Left ventricle myocardium superior (tissue), 1 donor: ENCODE measurements at regions of chr12 and their contacts with region 1.

Region 1: DNA sequence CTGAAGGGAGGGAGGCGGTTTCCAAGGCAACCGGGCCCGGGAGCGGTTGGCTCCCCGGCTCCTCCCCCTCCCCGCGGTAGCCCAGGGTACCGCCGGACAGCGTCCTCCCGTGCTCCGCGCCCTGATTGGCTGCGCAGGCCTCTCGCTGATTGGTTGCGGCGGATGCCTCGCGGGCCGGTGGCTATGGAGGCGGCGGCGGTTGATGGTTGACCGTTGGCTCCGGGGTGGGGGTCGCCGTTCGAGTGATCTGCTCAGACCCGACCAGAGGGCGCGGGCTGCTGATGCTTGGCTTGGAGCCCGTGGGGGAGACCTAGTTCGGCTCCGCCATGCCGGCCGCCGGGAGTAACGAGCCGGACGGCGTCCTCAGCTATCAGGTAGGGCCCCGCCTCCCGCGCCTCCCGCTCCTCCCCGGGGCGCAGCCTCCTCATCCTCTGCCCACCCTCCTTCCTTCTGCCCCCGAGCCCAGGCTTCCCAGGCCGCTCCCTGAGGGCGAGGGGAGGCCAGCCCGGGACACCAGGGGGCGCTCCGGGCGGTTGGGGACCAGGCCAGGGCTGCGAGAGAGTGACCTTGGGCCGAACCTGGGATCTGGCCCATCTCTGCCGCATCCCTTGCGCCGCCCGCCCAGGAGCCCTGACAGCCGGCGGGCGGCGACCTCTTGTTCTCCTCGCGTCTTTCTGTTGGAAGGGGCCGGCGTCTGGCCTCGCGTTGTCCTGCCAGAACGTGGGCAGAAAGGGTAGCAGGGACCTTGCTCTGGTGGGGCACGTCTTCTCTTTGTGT is at the start of gene SLC4A8:
- DNase-seq: peak; percentile 89
- ATAC-seq: peak; percentile 98
- total RNA-seq, gene SLC4A8: 0.32 TPM

Region 2: GRCh38 chr12:51471111-51471864 is 46.4 kb after region 1 on chr12:
- intact Hi-C with region 1: no loop called
- DNase-seq: no peak
- ATAC-seq: no peak

Region 3: GRCh38 chr12:51521554-51522276 is 96.9 kb after region 1 on chr12:
- intact Hi-C with region 1: no loop called
- DNase-seq: no peak
- ATAC-seq: no peak

Region 4: GRCh38 chr12:51531978-51532497 is 107.2 kb after region 1 on chr12:
- intact Hi-C with region 1: loop called (anchors 2 kb)
- DNase-seq: peak; percentile 65
- ATAC-seq: peak; percentile 88

Region 5: GRCh38 chr12:51814311-51815088 is 389.6 kb after region 1 on chr12:
- intact Hi-C with region 1: loop called (anchors 10 kb)
- DNase-seq: peak; percentile 92
- ATAC-seq: peak; percentile 91